ENCODE measurements at regions of chr18 and their contacts with region 1.

Region 1: GRCh38 chr18:31592506-31593157 is 955 bp downstream of the TTR start:
- DNase-seq: no peak
- ATAC-seq: no peak
- H3K4me3 ChIP-seq: no peak overlapping the region
- H3K4me3 Mint-ChIP-seq: no peak overlapping the region
- H3K27ac ChIP-seq: no peak overlapping the region
- H3K27ac Mint-ChIP-seq: no peak overlapping the region
- H3K4me1 ChIP-seq: no peaks in the 10 kb centered on the region
- H3K4me1 Mint-ChIP-seq: no peaks in the 10 kb centered on the region
- H3K27me3 ChIP-seq: no peaks in the 10 kb centered on the region
- H3K27me3 Mint-ChIP-seq: peaks cover 6% of the 10 kb centered on the region in 2 donors

Region 2: GRCh38 chr18:31576670-31577069 is 16.0 kb before region 1 on chr18:
- CTCF ChIA-PET with region 1: interaction called in 1 of 2 experiments, 12 read pairs
- POLR2A ChIA-PET with region 1: interaction called in 1 of 2 experiments, 3 read pairs
- DNase-seq: no peak
- ATAC-seq: no peak
- H3K4me3 ChIP-seq: no peak overlapping the region
- H3K4me3 Mint-ChIP-seq: no peak overlapping the region
- H3K27ac ChIP-seq: no peak overlapping the region
- H3K27ac Mint-ChIP-seq: no peak overlapping the region
- H3K4me1 ChIP-seq: no peaks in the 10 kb centered on the region
- H3K4me1 Mint-ChIP-seq: no peaks in the 10 kb centered on the region
- H3K27me3 ChIP-seq: no peaks in the 10 kb centered on the region
- H3K27me3 Mint-ChIP-seq: no peaks in the 10 kb centered on the region

Region 3: GRCh38 chr18:31990823-31991222 is 398.2 kb after region 1 on chr18:
- CTCF ChIA-PET with region 1: no interaction called
- POLR2A ChIA-PET with region 1: no interaction called
- DNase-seq: no peak
- ATAC-seq: no peak
- H3K4me3 ChIP-seq: no peak overlapping the region
- H3K4me3 Mint-ChIP-seq: no peak overlapping the region
- H3K27ac ChIP-seq: no peak overlapping the region
- H3K27ac Mint-ChIP-seq: no peak overlapping the region
- H3K4me1 ChIP-seq: no peaks in the 10 kb centered on the region
- H3K4me1 Mint-ChIP-seq: peaks cover 0 to 3% (median 0%) of the 10 kb centered on the region in 3 donors
- H3K27me3 ChIP-seq: no peaks in the 10 kb centered on the region
- H3K27me3 Mint-ChIP-seq: no peaks in the 10 kb centered on the region

Measured in T-cell (primary cell).